K562 (cell line): ENCODE measurements at regions of chr4 and their contacts with region 1.

Region 1: GRCh38 chr4:152525873-152526272 is 10.0 kb downstream of the FBXW7 start:
- DNase-seq: no peak
- ATAC-seq: no peak
- H3K4me3 ChIP-seq: no peak overlapping the region
- H3K27ac ChIP-seq: no peak overlapping the region
- H3K4me1 ChIP-seq: peaks cover 0 to 32% of the 10 kb centered on the region in 2 experiments
- H3K27me3 ChIP-seq: no peaks in the 10 kb centered on the region
- CTCF ChIP-seq: no peak
- EP300 ChIP-seq: no peak
- POLR2A ChIP-seq: no peak
- RAD21 ChIP-seq: no peak

Region 2: DNA sequence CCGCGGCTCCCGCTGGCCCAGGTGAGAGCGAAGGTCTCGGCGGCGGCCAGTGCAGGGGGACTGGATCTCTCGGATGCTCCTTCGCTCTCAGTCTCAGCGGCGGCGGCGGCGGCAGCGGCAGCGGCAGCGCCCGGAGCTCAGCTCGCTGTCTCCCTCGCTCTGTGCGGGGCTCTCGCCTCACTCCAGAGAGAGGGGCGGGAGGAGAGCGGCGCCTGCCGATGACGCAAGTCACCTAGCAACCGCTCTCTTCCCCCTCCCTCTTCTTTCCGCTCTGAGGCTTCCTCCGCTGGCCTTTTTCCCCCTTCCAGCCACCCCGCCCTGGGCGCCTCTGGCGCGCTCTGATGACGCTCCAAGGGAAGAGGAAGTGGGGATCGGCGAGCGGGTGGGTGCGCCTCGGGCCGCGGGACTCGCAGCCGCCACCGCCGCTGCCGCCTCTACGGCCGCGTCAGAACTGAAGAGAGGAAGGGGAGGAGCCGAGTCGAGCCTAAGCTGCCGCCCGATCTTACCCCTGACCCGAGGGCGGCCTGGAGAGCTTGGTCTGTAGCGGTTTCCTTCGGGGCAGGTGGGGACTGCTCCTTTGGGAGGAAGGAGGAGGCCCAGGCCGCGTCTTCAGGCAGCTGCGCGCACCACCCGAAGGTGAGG is 10.2 kb after region 1 on chr4 and contains the start of gene FBXW7:
- CTCF ChIA-PET with region 1: no interaction called
- POLR2A ChIA-PET with region 1: interaction called, 12 read pairs
- in situ Hi-C with region 1: no loop called
- intact Hi-C with region 1: no loop called
- DNase-seq: peak; percentile 94 to 99 (median 96)
- ATAC-seq: peak; percentile 91
- H3K4me3 ChIP-seq: peak within 1 kb of the TSS; percentile 91
- H3K27ac ChIP-seq: peak within 1 kb of the TSS; percentile 93
- H3K4me1 ChIP-seq: peaks cover 22 to 23% of the 10 kb centered on the region in 2 experiments
- H3K27me3 ChIP-seq: no peaks in the 10 kb centered on the region
- CTCF ChIP-seq: no peak
- EP300 ChIP-seq: peak; percentile 52
- POLR2A ChIP-seq: peak; percentile 93
- RAD21 ChIP-seq: 0 out of 4 replicates have a peak, but pooled peaks of 1 of the 2 experiments have one; percentile 2
- polyA plus RNA-seq, gene FBXW7: 6.8 to 9.1 TPM